H1 (cell line): ENCODE measurements at regions of chr22 and their contacts with region 1.

Region 1: DNA sequence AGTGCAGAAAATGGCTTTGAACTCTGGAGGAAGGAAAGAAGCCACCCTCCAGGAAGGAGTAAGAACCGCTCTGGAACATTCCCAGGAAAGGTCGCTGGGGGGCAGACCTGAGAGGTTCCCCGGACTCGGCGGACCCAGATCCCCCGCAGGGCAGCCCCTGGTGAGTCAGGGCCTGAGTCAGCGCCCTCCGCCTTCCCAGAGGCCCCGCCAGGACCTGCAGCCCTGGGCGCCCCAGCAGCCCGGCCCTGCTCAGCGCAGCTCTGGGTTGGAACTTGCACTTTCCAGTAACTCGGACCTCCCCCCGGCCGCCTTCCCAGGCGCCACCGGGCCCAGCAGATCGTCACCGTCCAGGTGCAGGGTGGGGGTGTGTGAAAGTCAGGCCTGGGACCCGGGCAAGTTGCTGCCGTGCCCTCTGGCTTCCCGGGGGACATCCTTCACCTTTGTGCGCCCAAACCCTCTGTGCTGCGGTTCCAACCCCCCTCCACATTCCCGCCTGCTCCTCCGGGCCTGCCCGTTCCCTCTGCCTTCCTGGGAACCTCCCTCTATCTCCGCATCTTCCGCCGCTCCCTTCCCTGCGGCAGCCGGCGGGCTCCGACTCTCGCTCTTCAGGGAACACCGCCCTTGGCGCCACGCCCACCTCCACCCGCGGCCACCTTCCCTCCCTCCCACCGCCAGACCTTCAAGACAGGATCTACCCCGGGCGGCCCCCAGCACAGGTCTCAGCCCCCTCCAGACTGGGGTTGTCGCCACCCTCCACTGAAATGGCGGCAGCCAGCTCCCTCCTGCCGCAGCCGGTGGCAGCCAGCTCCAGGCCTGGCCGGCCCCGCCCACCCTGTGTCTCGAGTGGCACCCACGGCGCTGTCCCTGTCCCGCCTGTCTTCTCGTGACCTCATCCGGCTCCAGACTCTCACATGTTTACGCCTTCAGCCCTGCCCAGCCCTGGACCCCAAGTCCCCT is 36.8 kb upstream of the WNT7B start:
- DNase-seq: peak; percentile 67 to 95
- H3K4me3 ChIP-seq: peak overlapping the region; percentile 55 to 77 (median 68)
- H3K27ac ChIP-seq: peak overlapping the region; percentile 35; the same call in 1 of the 2 replicates
- H3K4me1 ChIP-seq: peaks cover 0 to 13% (median 4%) of the 10 kb centered on the region in 4 experiments; a peak in 6 of 7 replicates
- H3K27me3 ChIP-seq: no peaks in the 10 kb centered on the region
- CTCF ChIP-seq: peak; percentile 57 to 72 (median 63)
- EP300 ChIP-seq: no peak
- POLR2A ChIP-seq: peak in 1 of 2 experiments; percentile 76; a peak in 2 of 3 replicates
- RAD21 ChIP-seq: peak; percentile 29 to 58

Region 2: DNA sequence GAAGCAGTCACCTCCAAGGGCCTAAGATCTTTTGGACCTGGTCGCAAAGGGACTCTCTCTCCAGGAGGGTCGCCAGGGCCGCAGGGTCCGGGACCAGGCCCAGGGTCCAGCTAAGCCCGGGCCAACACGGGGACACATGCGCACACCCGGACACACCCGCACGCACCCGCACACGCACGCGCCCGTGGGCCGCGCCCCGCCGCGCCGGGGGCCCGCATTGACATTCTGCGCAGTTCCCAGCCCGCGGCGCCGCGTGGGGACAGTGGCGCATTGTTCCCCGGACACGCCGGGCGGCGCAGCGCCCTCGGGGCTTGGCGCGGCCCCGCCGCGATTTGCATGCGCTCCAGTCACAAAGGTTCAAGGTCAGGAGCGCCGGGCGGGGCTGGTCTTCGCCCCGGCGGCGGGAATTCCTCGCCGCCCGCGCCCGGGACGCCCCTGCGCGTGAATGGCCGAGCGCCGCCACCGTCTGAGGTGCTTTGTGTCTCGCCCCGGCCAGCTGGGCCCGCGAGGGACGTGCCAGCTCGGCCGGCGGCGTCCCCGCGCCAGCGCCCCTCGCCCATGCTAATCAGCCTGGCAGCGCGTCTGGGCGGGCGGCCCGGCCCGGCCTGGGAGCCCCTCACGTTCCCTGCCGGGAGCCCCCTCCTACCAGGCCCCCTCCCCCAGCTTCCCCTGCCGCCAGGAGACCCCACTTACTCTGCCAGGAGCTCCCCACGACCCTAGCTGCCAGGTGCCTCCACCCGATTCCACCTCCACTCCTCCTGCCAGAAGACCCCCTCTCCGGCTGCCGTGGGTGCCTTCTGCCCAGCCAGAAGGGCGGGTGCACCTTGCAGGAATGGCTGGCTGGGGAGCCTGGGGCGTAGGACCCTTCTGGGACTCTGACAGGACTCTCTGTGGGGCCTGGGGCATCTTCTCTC is 13.7 kb after region 1 on chr22:
- CTCF ChIA-PET with region 1: interaction called, 19 read pairs
- POLR2A ChIA-PET with region 1: interaction called, 6 read pairs
- DNase-seq: no peak
- H3K4me3 ChIP-seq: peak overlapping the region; percentile 36 to 62 (median 51)
- H3K27ac ChIP-seq: no peak overlapping the region
- H3K4me1 ChIP-seq: peaks cover 0 to 18% (median 11%) of the 10 kb centered on the region in 4 experiments; a peak in 6 of 7 replicates
- H3K27me3 ChIP-seq: peaks cover 10 to 47% (median 35%) of the 10 kb centered on the region in 4 experiments
- CTCF ChIP-seq: no peak
- EP300 ChIP-seq: no peak
- POLR2A ChIP-seq: no peak
- RAD21 ChIP-seq: no peak

Region 3: DNA sequence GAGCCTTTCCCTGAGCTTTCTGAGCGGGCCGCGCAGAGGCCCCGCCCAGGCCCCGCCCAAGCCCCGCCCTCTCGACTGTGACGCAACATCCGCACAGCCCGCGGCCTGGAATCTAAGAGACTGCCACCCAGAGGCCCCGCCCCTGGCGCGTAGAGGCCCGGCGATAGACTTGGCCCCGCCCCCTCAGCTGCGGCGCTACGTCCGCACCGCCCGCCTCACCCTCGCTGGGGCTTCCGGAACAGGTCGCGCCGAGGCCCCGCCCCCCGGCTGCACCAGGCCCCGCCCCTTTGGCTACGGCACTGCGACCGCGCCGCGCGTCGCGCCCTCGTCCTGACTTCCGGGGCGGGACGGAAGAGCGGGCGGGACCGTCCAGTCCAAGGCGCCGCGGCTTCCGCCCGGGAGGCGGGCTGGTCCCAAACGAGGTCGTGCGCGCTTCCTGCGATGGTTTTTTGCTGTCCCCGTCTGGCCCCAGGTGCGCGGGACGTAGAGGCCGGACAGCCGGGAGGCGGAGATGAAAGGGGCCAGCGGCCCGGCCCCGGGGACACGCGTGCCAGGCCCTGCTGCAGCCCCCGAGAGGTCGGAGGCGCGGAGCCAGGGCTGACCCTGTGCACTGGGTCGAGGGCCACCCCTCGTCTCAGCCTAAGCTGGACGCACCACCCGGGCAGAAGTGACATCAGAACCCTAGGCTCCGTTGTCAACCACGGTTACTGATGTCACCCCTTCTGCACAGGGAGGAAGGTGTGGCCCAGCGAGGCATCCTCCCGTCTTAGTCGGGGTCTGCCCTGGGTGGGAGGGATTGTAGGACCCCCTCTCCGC is 22.2 kb after region 1 on chr22:
- CTCF ChIA-PET with region 1: interaction called, 46 read pairs
- POLR2A ChIA-PET with region 1: interaction called, 5 read pairs
- DNase-seq: peak; percentile 97 to 100
- H3K4me3 ChIP-seq: peak overlapping the region; percentile 72 to 86 (median 79)
- H3K27ac ChIP-seq: 0 out of 2 replicates have a peak overlapping the region, but pooled peaks have one; percentile 31
- H3K4me1 ChIP-seq: peaks cover 0 to 23% (median 11%) of the 10 kb centered on the region in 4 experiments; a peak in 6 of 7 replicates
- H3K27me3 ChIP-seq: no peaks in the 10 kb centered on the region
- CTCF ChIP-seq: no peak
- EP300 ChIP-seq: no peak
- POLR2A ChIP-seq: peak in 1 of 2 experiments; percentile 64; a peak in 1 of 3 replicates
- RAD21 ChIP-seq: no peak

Region 4: DNA sequence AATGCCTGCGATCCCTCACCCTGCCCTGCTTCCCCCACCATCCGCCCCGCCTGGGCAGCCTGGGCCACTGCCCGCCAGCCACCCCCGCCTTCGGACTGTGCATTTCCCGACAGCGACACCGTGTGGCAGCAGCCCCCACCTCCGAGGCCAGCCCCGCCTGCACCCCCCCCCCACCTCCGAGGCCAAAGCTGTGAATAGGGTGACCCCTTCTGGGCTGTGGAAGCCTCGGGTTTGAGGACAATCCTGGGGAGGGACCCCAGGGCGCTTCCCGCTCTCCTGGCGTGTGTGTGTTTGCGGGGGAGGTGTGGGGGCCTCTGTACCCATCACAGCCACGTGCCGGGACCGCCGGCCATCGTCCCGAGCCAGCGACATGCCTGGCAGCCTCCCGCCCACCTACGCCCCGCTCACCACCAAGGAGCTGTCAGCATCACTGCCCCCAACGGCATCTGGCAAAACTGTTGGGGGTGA is 102.8 kb after region 1 on chr22:
- CTCF ChIA-PET with region 1: interaction called, 147 read pairs
- POLR2A ChIA-PET with region 1: no interaction called
- DNase-seq: peak; percentile 67 to 96
- H3K4me3 ChIP-seq: no peak overlapping the region
- H3K27ac ChIP-seq: no peak overlapping the region
- H3K4me1 ChIP-seq: peaks cover 0 to 8% (median 7%) of the 10 kb centered on the region in 4 experiments; a peak in 4 of 7 replicates
- H3K27me3 ChIP-seq: no peaks in the 10 kb centered on the region; a peak in 2 of 7 replicates
- CTCF ChIP-seq: peak; percentile 75 to 99 (median 93)
- EP300 ChIP-seq: no peak
- POLR2A ChIP-seq: no peak
- RAD21 ChIP-seq: peak; percentile 94 to 96